Caco-2 (cell line): ENCODE measurements at regions of chr11 and their contacts with region 1.

Region 1: DNA sequence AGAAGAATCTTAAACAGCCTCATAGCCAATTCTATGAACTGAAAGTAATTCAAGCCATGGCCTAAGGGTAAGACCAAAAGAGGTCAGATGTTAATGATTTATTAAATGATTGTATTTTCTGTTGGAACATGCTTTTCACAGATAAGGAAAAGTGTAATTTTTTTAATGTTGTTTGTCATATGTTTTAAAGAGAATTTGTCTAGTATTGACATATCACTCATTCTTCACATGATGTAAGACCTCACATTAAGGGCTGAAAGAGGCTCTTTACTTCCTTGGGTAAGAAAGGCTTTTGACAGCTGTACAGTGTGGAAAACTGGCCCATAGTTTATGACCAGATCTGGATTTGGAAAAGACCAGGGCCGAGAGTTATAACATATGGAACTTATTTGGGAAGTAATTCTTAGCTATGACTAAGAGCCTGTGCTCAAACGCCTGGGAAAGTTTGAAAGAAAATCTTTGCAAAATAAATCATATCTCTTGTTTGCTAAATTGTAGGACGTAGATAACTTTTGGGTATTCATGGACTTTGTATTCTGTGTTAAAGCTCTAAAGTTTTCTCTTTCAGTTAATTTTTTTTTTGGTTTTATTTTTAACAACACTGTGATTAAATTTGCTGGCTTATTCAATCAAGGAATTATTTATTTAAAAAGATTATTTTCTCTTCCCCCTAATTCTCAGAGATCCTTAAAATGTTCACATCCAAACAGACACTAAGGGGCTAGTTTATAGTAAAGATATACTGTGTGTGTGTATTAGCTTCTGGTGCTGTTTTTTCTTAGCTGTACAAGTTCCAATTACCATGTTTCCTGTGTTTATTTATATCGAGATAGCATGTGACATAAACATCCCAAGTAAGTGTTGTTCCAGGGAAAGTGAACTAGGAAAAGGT is 162.2 kb downstream of the ARHGAP42 start:
- DNase-seq: peak in 1 of 2 experiments; percentile 54
- H3K4me3 ChIP-seq: no peak overlapping the region
- H3K4me3 Mint-ChIP-seq: peak overlapping the region; percentile 27
- H3K27ac Mint-ChIP-seq: peak overlapping the region; percentile 30
- H3K4me1 ChIP-seq: peaks cover 46% of the 10 kb centered on the region
- H3K4me1 Mint-ChIP-seq: peaks cover 50% of the 10 kb centered on the region
- H3K27me3 ChIP-seq: no peaks in the 10 kb centered on the region
- H3K27me3 Mint-ChIP-seq: no peaks in the 10 kb centered on the region
- CTCF ChIP-seq: no peak

Region 2: DNA sequence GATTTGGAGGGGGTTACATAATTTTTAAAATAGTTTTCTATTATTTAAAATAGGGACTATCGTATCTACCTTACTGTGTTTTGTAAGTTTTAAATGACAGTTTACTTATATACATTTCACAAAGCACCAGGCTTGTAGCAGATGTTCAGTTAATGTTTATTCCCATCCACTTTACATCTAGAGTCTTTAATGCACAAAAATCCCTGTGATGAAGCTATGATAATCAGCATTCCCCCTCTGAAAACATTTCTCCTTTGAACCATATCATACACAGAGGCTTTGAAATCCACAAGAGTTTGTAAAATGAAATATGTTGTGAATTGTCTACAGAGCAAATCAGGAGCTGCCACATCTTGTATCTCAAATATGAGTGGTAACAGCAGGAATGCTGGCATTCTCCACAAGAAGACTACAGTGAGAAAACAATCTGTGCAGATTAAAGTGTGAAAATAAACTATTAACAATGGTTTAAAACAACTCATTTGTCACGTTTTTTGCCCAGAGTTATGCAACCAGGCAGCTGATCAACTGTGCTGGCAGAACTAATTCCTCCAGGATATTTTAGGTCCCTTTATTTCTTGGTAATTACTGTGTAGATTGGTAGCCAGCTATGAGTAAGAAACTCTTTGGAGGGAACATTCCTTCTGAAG is 861.3 kb before region 1 on chr11:
- CTCF ChIA-PET with region 1: no interaction called
- POLR2A ChIA-PET with region 1: no interaction called
- intact Hi-C with region 1: no loop called
- DNase-seq: no peak
- H3K4me3 ChIP-seq: no peak overlapping the region
- H3K4me3 Mint-ChIP-seq: no peak overlapping the region
- H3K27ac Mint-ChIP-seq: peak overlapping the region; percentile 35
- H3K4me1 ChIP-seq: peaks cover 13% of the 10 kb centered on the region
- H3K4me1 Mint-ChIP-seq: peaks cover 15% of the 10 kb centered on the region
- H3K27me3 ChIP-seq: no peaks in the 10 kb centered on the region
- H3K27me3 Mint-ChIP-seq: no peaks in the 10 kb centered on the region
- CTCF ChIP-seq: no peak

Region 3: DNA sequence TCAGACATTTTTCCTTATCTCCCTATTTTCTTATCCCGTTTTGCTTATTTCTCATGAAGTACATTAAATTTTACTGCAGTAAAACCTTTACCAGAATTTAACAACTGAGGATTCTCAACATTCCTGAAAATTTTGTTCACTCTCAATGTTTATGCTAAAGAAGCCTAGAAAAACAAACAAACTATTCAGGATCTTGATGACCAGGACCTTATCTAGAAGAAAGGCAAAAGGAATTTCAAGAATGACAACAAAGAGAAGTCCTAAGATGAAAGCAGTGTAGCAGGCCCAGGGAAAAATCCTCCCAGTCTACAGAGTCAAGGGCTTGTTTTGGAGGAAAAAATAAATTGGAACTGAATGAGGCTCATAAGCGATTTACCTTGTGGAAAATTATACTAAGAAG is 445.4 kb before region 1 on chr11:
- CTCF ChIA-PET with region 1: no interaction called
- POLR2A ChIA-PET with region 1: no interaction called
- intact Hi-C with region 1: loop called (anchors 2 kb)
- DNase-seq: peak; percentile 69 to 73
- H3K4me3 ChIP-seq: no peak overlapping the region
- H3K4me3 Mint-ChIP-seq: peak overlapping the region; percentile 39
- H3K27ac Mint-ChIP-seq: peak overlapping the region; percentile 87
- H3K4me1 ChIP-seq: peaks cover 74% of the 10 kb centered on the region
- H3K4me1 Mint-ChIP-seq: peaks cover 56% of the 10 kb centered on the region
- H3K27me3 ChIP-seq: no peaks in the 10 kb centered on the region
- H3K27me3 Mint-ChIP-seq: no peaks in the 10 kb centered on the region
- CTCF ChIP-seq: no peak

Region 4: GRCh38 chr11:100705447-100705846 is 143.8 kb before region 1 on chr11:
- CTCF ChIA-PET with region 1: interaction called, 11 read pairs
- POLR2A ChIA-PET with region 1: no interaction called
- intact Hi-C with region 1: no loop called
- DNase-seq: no peak
- H3K4me3 ChIP-seq: no peak overlapping the region
- H3K4me3 Mint-ChIP-seq: no peak overlapping the region
- H3K27ac Mint-ChIP-seq: no peak overlapping the region
- H3K4me1 ChIP-seq: no peaks in the 10 kb centered on the region
- H3K4me1 Mint-ChIP-seq: no peaks in the 10 kb centered on the region
- H3K27me3 ChIP-seq: no peaks in the 10 kb centered on the region
- H3K27me3 Mint-ChIP-seq: no peaks in the 10 kb centered on the region
- CTCF ChIP-seq: no peak

Region 5: DNA sequence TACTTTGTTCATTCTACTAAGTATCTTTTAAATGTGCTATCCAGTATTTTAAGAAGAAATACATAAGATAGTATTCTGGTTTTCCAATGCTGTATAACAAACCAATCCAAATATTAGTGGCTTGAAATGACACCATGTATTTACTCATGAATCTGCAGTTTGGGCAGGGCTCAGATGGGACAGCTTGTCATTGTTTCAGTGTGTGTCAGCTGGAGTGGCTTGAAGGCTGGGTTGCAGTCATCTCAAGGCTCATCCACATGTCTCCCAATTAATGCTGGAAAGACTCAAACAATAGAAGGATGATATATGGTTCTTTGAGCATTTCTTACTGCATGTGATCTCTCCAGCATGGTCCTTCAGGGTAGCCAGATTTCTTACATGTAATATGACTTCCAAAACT is 16.0 kb before region 1 on chr11:
- CTCF ChIA-PET with region 1: interaction called, 25 read pairs
- POLR2A ChIA-PET with region 1: no interaction called
- intact Hi-C with region 1: loop called (anchors 1 kb)
- DNase-seq: no peak
- H3K4me3 ChIP-seq: no peak overlapping the region
- H3K4me3 Mint-ChIP-seq: no peak overlapping the region
- H3K27ac Mint-ChIP-seq: no peak overlapping the region
- H3K4me1 ChIP-seq: peaks cover 33% of the 10 kb centered on the region
- H3K4me1 Mint-ChIP-seq: peaks cover 27% of the 10 kb centered on the region
- H3K27me3 ChIP-seq: no peaks in the 10 kb centered on the region
- H3K27me3 Mint-ChIP-seq: no peaks in the 10 kb centered on the region
- CTCF ChIP-seq: no peak